CD4-positive, alpha-beta T cell (primary cell): ENCODE measurements at regions of chr12 and their contacts with region 1.

Region 1: DNA sequence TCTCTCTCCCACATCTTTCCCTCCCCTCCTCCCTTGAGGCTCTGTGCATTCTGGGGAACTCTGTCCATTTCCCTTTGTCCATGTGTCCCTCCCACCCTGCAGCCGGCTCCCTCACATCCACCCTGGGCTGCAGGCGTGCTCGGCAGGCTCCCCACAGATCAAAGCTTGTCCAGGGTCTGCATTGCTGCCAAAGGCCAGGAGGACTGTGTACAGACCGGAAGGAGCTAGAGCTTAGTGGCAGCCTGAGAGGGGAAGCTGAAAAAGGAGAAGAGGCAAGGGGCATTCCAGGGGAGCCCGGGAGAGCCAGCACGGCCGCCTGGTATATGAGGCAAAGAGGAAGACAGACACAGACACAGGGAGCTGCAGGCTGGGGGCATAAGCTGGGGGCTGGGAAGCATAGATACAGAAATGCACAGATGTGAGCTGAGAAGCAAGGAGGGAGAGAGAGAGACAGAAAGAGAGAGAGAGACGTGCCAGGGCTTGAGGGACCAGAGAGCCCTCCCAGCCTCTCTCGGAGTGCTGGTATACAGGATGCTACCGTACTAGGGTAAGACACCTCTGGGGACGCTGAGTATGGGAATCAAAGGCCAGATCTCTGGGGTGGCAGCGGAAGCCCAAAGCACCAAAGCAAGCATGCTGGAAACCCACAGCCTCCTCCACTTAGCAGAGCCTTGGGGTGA is 3.3 kb downstream of the CD4 start:
- DNase-seq: peak in 12 of 14 experiments; percentile 41 to 75 (median 58)
- ATAC-seq: peak; percentile 69
- H3K4me3 ChIP-seq: peak overlapping the region; percentile 66
- H3K4me3 Mint-ChIP-seq: peak overlapping the region; percentile 96
- H3K27ac ChIP-seq: peak overlapping the region; percentile 72 to 81
- H3K27ac Mint-ChIP-seq: peak overlapping the region; percentile 93
- H3K4me1 ChIP-seq: peaks cover 79% of the 10 kb centered on the region
- H3K4me1 Mint-ChIP-seq: peaks cover 80% of the 10 kb centered on the region
- H3K27me3 ChIP-seq: no peaks in the 10 kb centered on the region
- H3K27me3 Mint-ChIP-seq: no peaks in the 10 kb centered on the region
- CTCF ChIP-seq: no peak

Region 2: GRCh38 chr12:5856692-5857091 is 936.0 kb before region 1 on chr12:
- CTCF ChIA-PET with region 1: no interaction called
- POLR2A ChIA-PET with region 1: no interaction called
- intact Hi-C with region 1: no loop called
- DNase-seq: no peak
- ATAC-seq: no peak
- H3K4me3 ChIP-seq: no peak overlapping the region
- H3K4me3 Mint-ChIP-seq: no peak overlapping the region
- H3K27ac ChIP-seq: no peak overlapping the region
- H3K27ac Mint-ChIP-seq: no peak overlapping the region
- H3K4me1 ChIP-seq: no peaks in the 10 kb centered on the region
- H3K4me1 Mint-ChIP-seq: no peaks in the 10 kb centered on the region
- H3K27me3 ChIP-seq: peaks cover 0 to 1% of the 10 kb centered on the region in 2 experiments
- H3K27me3 Mint-ChIP-seq: peaks cover 46% of the 10 kb centered on the region
- CTCF ChIP-seq: no peak

Region 3: DNA sequence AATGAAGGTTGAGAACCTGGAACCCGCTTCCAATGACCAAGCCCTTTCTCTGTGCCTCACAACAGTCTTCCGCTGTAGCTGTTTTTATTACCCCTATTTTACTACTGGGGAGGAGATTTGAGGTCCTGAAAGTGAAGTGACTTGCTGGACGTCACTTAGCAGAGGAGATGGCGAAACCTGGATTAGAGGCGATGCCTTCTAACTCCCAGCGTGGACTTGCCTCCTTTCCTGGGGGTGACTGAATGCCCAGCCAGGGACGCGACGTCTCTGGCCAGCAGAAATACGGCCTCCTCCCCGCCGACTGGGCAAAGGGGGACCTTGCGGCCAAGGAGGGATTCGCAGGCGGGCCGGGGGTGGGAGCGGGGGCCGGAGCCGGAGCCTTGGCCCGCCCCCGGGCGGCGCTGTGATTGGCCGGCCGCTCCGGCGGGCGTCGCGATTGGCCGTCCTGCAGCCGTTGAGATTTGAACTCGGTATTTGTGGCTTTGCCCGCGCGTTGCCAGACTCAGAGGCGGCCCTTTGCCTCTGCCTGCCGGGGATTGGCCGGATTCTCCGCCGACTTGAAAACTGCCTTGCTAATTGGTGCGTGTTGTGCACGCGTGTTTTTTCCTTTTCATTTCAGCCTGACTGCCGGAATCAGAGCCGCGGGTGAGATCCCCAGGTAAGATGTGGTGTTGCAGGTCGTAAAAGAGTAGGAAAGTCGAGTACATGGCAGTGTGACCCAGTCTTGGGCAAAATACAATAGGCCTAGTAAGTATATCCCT is 299.0 kb before region 1 on chr12 and contains the start of gene NCAPD2:
- CTCF ChIA-PET with region 1: no interaction called
- POLR2A ChIA-PET with region 1: no interaction called
- intact Hi-C with region 1: no loop called
- DNase-seq: peak; percentile 87 to 98 (median 92)
- ATAC-seq: peak; percentile 84
- H3K4me3 ChIP-seq: peak within 1 kb of the TSS; percentile 96
- H3K4me3 Mint-ChIP-seq: peak within 1 kb of the TSS; percentile 93
- H3K27ac ChIP-seq: peak within 1 kb of the TSS; percentile 89 to 94
- H3K27ac Mint-ChIP-seq: peak within 1 kb of the TSS; percentile 91
- H3K4me1 ChIP-seq: peaks cover 34% of the 10 kb centered on the region
- H3K4me1 Mint-ChIP-seq: peaks cover 48% of the 10 kb centered on the region
- H3K27me3 ChIP-seq: no peaks in the 10 kb centered on the region
- H3K27me3 Mint-ChIP-seq: no peaks in the 10 kb centered on the region
- CTCF ChIP-seq: no peak
- total RNA-seq, gene NCAPD2: 13.7 to 14.9 TPM

Region 4: DNA sequence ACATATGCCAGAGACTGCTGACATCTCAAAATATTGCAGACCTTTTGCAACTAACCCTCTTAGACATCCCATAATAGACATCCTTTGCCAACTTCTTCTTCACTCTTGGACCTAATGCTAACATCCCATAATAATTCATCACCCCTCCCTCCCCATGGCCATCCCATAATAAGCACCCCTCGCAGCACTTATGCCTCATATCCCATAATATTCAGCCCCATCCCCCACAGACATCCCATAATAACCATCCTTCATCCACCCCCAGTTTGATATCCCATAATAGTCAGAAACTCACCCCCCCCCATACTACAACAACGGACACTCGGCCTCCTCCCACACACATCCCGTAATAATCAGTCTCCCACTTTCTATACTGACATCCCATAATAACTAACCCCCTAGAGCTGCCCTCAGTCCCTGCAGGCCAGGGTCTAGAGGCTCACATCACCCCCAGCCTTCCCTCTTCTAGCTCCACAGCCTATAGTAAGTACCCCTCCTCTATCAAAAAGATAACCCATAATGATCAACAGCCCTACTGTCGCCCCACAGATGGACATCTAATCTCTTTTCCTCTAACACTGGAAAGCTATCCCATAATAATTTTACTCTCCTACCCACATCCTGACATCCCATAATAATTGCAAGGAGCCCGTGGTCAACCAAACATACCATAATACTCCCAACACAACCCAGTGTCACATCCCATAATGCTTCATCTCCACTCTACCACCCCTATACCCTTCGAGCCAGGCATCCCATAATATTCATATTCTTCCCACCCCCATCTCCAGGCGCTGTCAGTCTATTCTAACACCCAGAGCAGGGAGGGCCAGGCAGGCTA is 184.7 kb before region 1 on chr12:
- CTCF ChIA-PET with region 1: no interaction called
- POLR2A ChIA-PET with region 1: interaction called, 4 read pairs
- intact Hi-C with region 1: loop called in 1 of 2 experiments (anchors 5 kb)
- DNase-seq: peak in 12 of 14 experiments; percentile 24 to 89 (median 51)
- ATAC-seq: peak; percentile 59
- H3K4me3 ChIP-seq: no peak overlapping the region
- H3K4me3 Mint-ChIP-seq: no peak overlapping the region
- H3K27ac ChIP-seq: peak overlapping the region; percentile 63 to 94
- H3K27ac Mint-ChIP-seq: no peak overlapping the region
- H3K4me1 ChIP-seq: peaks cover 71% of the 10 kb centered on the region
- H3K4me1 Mint-ChIP-seq: peaks cover 54% of the 10 kb centered on the region
- H3K27me3 ChIP-seq: no peaks in the 10 kb centered on the region
- H3K27me3 Mint-ChIP-seq: no peaks in the 10 kb centered on the region
- CTCF ChIP-seq: no peak

Region 5: GRCh38 chr12:6723607-6724396 is 68.9 kb before region 1 on chr12 and contains the start of gene COPS7A:
- CTCF ChIA-PET with region 1: no interaction called
- POLR2A ChIA-PET with region 1: interaction called, 16 read pairs
- intact Hi-C with region 1: no loop called
- DNase-seq: peak; percentile 81 to 99 (median 93)
- ATAC-seq: peak; percentile 84
- H3K4me3 ChIP-seq: peak within 1 kb of the TSS; percentile 59
- H3K4me3 Mint-ChIP-seq: peak within 1 kb of the TSS; percentile 87
- H3K27ac ChIP-seq: peak within 1 kb of the TSS; percentile 68 to 88
- H3K27ac Mint-ChIP-seq: peak within 1 kb of the TSS; percentile 83
- H3K4me1 ChIP-seq: peaks cover 18% of the 10 kb centered on the region
- H3K4me1 Mint-ChIP-seq: peaks cover 28% of the 10 kb centered on the region
- H3K27me3 ChIP-seq: no peaks in the 10 kb centered on the region
- H3K27me3 Mint-ChIP-seq: no peaks in the 10 kb centered on the region
- CTCF ChIP-seq: no peak
- total RNA-seq, gene COPS7A: 9.4 to 9.6 TPM

Region 6: GRCh38 chr12:6764011-6764828 is 28.4 kb before region 1 on chr12:
- CTCF ChIA-PET with region 1: interaction called, 12 read pairs
- POLR2A ChIA-PET with region 1: interaction called, 20 read pairs
- intact Hi-C with region 1: no loop called
- DNase-seq: peak in 7 of 14 experiments; percentile 25 to 82 (median 48)
- ATAC-seq: peak; percentile 83
- H3K4me3 ChIP-seq: peak overlapping the region; percentile 10
- H3K4me3 Mint-ChIP-seq: peak overlapping the region; percentile 65
- H3K27ac ChIP-seq: no peak overlapping the region
- H3K27ac Mint-ChIP-seq: no peak overlapping the region
- H3K4me1 ChIP-seq: peaks cover 34% of the 10 kb centered on the region
- H3K4me1 Mint-ChIP-seq: peaks cover 38% of the 10 kb centered on the region
- H3K27me3 ChIP-seq: peaks cover 22 to 31% of the 10 kb centered on the region in 2 experiments
- H3K27me3 Mint-ChIP-seq: peaks cover 46% of the 10 kb centered on the region
- CTCF ChIP-seq: no peak

Region 7: DNA sequence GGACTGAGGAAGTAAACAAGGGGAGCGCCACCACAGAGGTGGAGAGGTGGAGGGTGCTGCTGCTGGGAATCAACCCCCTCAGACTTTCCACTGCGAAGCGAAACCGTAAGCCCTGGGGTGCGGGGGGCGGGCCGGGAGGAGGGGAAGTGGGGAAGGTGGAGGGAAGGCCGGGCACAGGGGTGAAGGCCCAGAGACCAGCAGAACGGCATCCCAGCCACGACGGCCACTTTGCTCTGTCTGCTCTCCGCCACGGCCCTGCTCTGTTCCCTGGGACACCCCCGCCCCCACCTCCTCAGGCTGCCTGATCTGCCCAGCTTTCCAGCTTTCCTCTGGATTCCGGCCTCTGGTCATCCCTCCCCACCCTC is 20.3 kb before region 1 on chr12 and contains the start of gene LAG3:
- CTCF ChIA-PET with region 1: interaction called, 12 read pairs
- POLR2A ChIA-PET with region 1: interaction called, 15 read pairs
- intact Hi-C with region 1: no loop called
- DNase-seq: peak in 4 of 14 experiments; percentile 27 to 71 (median 40)
- ATAC-seq: peak; percentile 29
- H3K4me3 ChIP-seq: peak within 1 kb of the TSS; percentile 46
- H3K4me3 Mint-ChIP-seq: peak within 1 kb of the TSS; percentile 87
- H3K27ac ChIP-seq: no peak within 1 kb of the TSS
- H3K27ac Mint-ChIP-seq: peak within 1 kb of the TSS; percentile 40
- H3K4me1 ChIP-seq: peaks cover 55% of the 10 kb centered on the region
- H3K4me1 Mint-ChIP-seq: peaks cover 60% of the 10 kb centered on the region
- H3K27me3 ChIP-seq: peaks cover 17 to 33% of the 10 kb centered on the region in 2 experiments
- H3K27me3 Mint-ChIP-seq: peaks cover 63% of the 10 kb centered on the region
- CTCF ChIP-seq: no peak
- total RNA-seq, gene LAG3: 0.82 to 1.4 TPM

Region 8: DNA sequence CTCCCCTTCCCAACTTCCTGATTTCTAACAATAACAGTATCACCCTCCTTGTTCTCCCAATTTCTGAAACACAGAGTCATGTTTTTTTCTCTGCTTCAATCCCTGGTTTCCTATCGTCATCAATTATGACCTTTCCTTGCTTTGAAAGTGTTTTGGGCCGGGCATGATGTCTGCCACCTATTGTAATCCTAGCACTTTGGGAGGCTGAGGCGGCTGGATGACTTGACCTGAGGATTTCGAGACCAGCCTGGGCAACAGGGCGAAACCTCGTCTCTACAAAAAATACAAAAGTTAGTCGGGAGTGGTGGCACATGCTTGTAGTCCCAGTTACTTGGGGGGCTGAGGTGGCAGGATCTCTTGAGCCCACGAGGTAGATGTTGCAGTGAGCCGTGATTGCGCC is 16.4 kb after region 1 on chr12:
- CTCF ChIA-PET with region 1: no interaction called
- POLR2A ChIA-PET with region 1: interaction called, 6 read pairs
- intact Hi-C with region 1: loop called in 1 of 2 experiments (anchors 2 kb)
- DNase-seq: peak in 1 of 14 experiments; percentile 1
- ATAC-seq: no peak
- H3K4me3 ChIP-seq: no peak overlapping the region
- H3K4me3 Mint-ChIP-seq: no peak overlapping the region
- H3K27ac ChIP-seq: no peak overlapping the region
- H3K27ac Mint-ChIP-seq: peak overlapping the region; percentile 13
- H3K4me1 ChIP-seq: peaks cover 8% of the 10 kb centered on the region
- H3K4me1 Mint-ChIP-seq: peaks cover 27% of the 10 kb centered on the region
- H3K27me3 ChIP-seq: no peaks in the 10 kb centered on the region
- H3K27me3 Mint-ChIP-seq: no peaks in the 10 kb centered on the region
- CTCF ChIP-seq: no peak